IMR-90 (cell line): ENCODE measurements at regions of chr9 and their contacts with region 1.

Region 1: GRCh38 chr9:2014696-2015580 is at the start of gene SMARCA2:
- DNase-seq: peak; percentile 96
- ATAC-seq: peak; percentile 90
- H3K4me3 ChIP-seq: peak within 1 kb of the TSS; percentile 86
- H3K27ac ChIP-seq: peak within 1 kb of the TSS; percentile 70
- H3K4me1 ChIP-seq: peaks cover 2% of the 10 kb centered on the region
- H3K27me3 ChIP-seq: no peaks in the 10 kb centered on the region
- CTCF ChIP-seq: no peak
- POLR2A ChIP-seq: peak; percentile 57
- RAD21 ChIP-seq: no peak
- total RNA-seq, gene SMARCA2: 26.7 and 29.2 TPM in 2 replicates

Region 2: GRCh38 chr9:1979741-1980367 is 35.1 kb before region 1 on chr9:
- CTCF ChIA-PET with region 1: interaction called, 4 read pairs
- POLR2A ChIA-PET with region 1: no interaction called
- dilution Hi-C with region 1: no loop called
- in situ Hi-C with region 1: no loop called
- intact Hi-C with region 1: loop called (anchors 1 kb)
- DNase-seq: peak; percentile 49
- ATAC-seq: peak; percentile 70
- H3K4me3 ChIP-seq: no peak overlapping the region
- H3K27ac ChIP-seq: peak overlapping the region; percentile 35; the same call in 1 of the 2 replicates
- H3K4me1 ChIP-seq: peaks cover 13% of the 10 kb centered on the region
- H3K27me3 ChIP-seq: peaks cover 6% of the 10 kb centered on the region
- CTCF ChIP-seq: no peak
- POLR2A ChIP-seq: no peak
- RAD21 ChIP-seq: no peak

Region 3: GRCh38 chr9:2087500-2088313 is 72.8 kb after region 1 on chr9:
- CTCF ChIA-PET with region 1: no interaction called
- POLR2A ChIA-PET with region 1: no interaction called
- dilution Hi-C with region 1: no loop called
- in situ Hi-C with region 1: no loop called
- intact Hi-C with region 1: loop called (anchors 5 kb)
- DNase-seq: peak; percentile 52
- ATAC-seq: peak; percentile 80
- H3K4me3 ChIP-seq: no peak overlapping the region
- H3K27ac ChIP-seq: no peak overlapping the region
- H3K4me1 ChIP-seq: no peaks in the 10 kb centered on the region
- H3K27me3 ChIP-seq: no peaks in the 10 kb centered on the region
- CTCF ChIP-seq: peak; percentile 63
- POLR2A ChIP-seq: no peak
- RAD21 ChIP-seq: peak; percentile 63

Region 4: DNA sequence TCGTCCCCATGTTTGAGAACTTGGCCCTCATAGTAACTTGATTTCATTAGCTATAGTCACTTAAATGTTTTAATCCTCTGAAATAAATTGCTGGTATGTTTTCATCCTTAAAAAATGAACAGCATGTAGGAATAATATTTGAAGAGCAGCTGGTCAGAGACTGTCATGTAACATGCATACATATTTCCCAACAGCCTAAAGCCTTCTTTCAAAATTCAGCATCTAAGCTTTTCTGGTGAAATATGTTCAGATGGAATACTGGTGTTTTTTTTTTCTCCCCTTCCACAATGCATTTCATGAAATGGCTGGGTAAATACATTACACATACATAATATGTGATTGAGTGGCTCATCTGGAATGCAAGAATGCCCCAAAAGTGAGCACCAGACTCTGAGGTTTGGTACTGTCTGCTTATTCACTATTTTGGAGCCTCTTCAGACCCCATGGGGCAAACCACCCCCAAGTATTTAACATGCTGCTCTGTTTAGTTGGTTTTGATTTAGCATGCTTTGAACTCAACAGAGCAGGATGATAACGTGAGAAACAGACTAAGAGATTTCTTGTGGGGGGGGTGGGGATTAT is 94.2 kb after region 1 on chr9:
- CTCF ChIA-PET with region 1: no interaction called
- POLR2A ChIA-PET with region 1: no interaction called
- dilution Hi-C with region 1: loop called (anchors 25 kb)
- in situ Hi-C with region 1: no loop called
- intact Hi-C with region 1: loop called (anchors 5 kb)
- DNase-seq: peak; percentile 32
- ATAC-seq: peak; percentile 71
- H3K4me3 ChIP-seq: no peak overlapping the region
- H3K27ac ChIP-seq: no peak overlapping the region
- H3K4me1 ChIP-seq: 0 out of 2 replicates have a peak, but pooled peaks cover 2% of the 10 kb centered on the region
- H3K27me3 ChIP-seq: no peaks in the 10 kb centered on the region
- CTCF ChIP-seq: no peak
- POLR2A ChIP-seq: no peak
- RAD21 ChIP-seq: no peak

Region 5: GRCh38 chr9:2116073-2116472 is 101.1 kb after region 1 on chr9:
- CTCF ChIA-PET with region 1: no interaction called
- POLR2A ChIA-PET with region 1: no interaction called
- dilution Hi-C with region 1: loop called (anchors 25 kb)
- in situ Hi-C with region 1: no loop called
- intact Hi-C with region 1: no loop called
- DNase-seq: no peak
- ATAC-seq: peak; percentile 53
- H3K4me3 ChIP-seq: no peak overlapping the region
- H3K27ac ChIP-seq: no peak overlapping the region
- H3K4me1 ChIP-seq: no peaks in the 10 kb centered on the region
- H3K27me3 ChIP-seq: no peaks in the 10 kb centered on the region
- CTCF ChIP-seq: peak; percentile 26; the same call in 1 of the 2 replicates
- POLR2A ChIP-seq: no peak
- RAD21 ChIP-seq: peak; percentile 20; the same call in 1 of the 2 replicates

Region 6: DNA sequence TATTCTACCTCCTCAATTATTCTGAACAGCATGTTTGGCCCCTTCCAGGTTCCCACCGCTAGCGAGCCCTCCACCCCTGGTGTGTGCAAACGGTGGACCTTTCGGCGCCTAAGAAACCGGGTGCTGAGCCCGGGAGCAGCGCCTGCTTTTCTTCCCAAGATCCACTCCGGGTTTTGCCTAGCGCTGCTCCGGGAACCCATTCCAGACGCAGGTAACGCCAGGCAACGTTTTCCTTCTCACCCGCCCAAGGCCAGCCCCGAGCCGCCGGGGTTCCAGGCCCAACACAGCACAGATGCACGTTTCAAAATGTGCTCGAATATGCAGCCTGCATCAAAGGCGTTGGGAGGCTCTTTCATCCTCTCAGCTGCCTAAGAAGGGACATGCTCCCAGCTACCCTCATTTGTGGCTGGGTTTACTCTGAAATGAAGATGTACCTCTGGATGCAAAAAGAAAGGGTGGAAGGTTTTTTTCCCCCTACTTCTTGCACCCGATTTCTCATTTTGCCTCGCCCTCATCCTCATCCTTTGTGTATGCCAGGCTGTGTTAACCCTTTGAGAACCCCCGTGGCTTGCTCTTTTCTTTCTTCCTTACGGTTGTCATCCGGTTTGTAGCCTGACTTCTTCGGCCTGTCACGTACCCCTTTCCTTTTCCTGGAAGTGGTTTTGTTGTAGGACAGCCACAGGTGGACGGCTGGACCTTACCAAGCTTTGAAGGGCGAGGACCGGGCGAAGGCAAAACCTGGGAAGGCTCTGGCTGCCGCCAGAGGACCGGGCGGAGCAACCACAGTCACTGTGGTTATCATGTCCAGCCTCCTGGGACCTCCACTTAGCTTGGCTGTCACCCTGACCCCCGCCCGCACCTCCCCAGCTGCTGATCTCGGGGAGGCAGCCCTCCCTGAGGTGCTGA is 227.2 kb after region 1 on chr9:
- CTCF ChIA-PET with region 1: no interaction called
- POLR2A ChIA-PET with region 1: no interaction called
- dilution Hi-C with region 1: no loop called
- in situ Hi-C with region 1: no loop called
- intact Hi-C with region 1: loop called (anchors 10 kb)
- DNase-seq: peak; percentile 88
- ATAC-seq: peak; percentile 99
- H3K4me3 ChIP-seq: peak overlapping the region; percentile 44
- H3K27ac ChIP-seq: peak overlapping the region; percentile 55; the same call in 1 of the 2 replicates
- H3K4me1 ChIP-seq: peaks cover 5% of the 10 kb centered on the region; the same call in 1 of the 2 replicates
- H3K27me3 ChIP-seq: peaks cover 3% of the 10 kb centered on the region
- CTCF ChIP-seq: no peak
- POLR2A ChIP-seq: no peak
- RAD21 ChIP-seq: 0 out of 2 replicates have a peak, but pooled peaks have one; percentile 11